Esophagus muscularis mucosa (tissue), 4 donors: ENCODE measurements at regions of chr13 and their contacts with region 1.

Region 1: GRCh38 chr13:102845630-102846260 is at the start of gene ERCC5:
- DNase-seq: peak; percentile 99
- H3K4me3 ChIP-seq: peak within 1 kb of the TSS; percentile 73 to 88 (median 85)
- H3K27ac ChIP-seq: peak within 1 kb of the TSS; percentile 92 to 96 (median 96)
- H3K4me1 ChIP-seq: peaks cover 10 to 40% (median 28%) of the 10 kb centered on the region in 4 donors
- H3K27me3 ChIP-seq: no peaks in the 10 kb centered on the region
- CTCF ChIP-seq: peak in 1 of 3 experiments; percentile 26
- EP300 ChIP-seq: no peak
- POLR2A ChIP-seq: peak; percentile 37
- total RNA-seq, gene ERCC5: 36.1 to 61.0 (median 44.0) TPM

Region 2: DNA sequence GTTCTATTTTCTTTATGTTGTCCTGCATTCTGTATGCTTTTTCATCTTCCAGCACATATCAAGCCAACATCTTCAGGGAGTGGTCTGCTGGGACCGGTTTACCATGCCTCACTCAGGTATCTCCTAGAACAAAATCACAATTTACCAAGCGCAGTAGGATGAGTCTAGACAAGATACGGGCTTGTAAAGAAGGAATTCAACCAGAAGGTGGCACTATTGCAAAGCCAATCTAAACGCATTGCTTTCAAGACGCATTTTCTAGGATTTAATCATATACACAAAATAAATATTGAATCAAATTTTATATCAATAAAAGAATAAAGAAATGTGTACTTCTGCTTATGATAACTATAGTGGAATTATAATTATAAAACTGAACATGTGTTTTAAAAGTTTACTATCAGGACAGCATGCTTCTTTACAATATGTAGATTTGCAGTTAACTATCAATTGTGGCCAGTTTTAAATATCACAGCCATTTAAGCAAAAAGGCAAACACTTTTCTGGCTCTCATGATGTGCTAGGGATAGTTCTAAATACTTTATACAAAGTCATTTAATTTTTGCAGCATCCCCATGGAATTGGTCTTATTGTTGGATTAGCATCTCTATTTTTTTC is 265.1 kb before region 1 on chr13:
- intact Hi-C with region 1: loop called (anchors 5 kb)
- DNase-seq: no peak
- H3K4me3 ChIP-seq: no peak overlapping the region
- H3K27ac ChIP-seq: no peak overlapping the region
- H3K4me1 ChIP-seq: no peaks in the 10 kb centered on the region
- H3K27me3 ChIP-seq: peaks cover 0 to 11% (median 0%) of the 10 kb centered on the region in 4 donors
- CTCF ChIP-seq: peak; percentile 61 to 77 (median 71)
- EP300 ChIP-seq: no peak
- POLR2A ChIP-seq: no peak

Region 3: DNA sequence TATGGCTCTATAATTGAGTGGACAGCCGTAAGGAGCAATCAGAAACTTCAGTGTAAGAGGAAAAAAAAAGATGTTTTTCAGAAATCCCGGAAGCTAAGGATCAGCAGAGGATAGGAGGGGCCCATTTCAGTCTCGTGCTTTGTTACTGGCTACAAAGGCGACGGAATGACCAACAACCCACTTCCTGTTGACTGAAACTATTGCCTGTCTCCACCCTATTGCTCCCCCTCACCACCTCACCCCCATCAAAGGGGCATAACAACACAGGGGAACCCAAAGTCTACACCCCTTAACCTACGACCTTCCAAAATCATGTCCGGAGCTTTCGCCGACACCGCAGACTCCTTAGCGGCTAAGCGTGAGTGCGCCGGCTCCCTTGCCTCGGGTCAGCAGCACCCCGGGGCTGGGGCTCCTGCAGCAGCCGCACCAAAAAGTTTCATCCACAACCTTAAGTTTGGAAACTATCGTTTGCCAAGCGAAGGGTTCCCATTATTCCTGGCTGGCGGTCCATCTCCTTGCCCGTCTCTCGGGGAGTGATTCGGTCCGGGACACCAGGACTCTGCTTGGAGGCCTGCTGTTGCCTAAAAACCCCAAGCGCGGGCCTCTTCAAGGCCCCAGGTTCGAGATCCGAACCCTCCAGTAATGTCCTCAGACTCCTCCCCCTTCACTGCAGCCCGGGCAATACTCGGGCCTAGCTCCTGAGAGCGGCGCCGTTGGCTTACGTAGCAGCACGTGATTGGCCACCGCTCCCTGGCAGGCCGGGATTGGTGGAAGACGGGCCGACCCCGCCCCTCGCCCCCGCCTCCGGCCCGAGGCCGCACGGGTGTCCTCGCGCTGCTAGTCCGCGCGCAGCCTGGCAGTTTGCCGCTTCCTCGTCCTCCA is 249.4 kb before region 1 on chr13 and contains the start of gene TPP2:
- intact Hi-C with region 1: loop called (anchors 2 kb)
- DNase-seq: peak; percentile 99
- H3K4me3 ChIP-seq: peak within 1 kb of the TSS; percentile 84 to 99 (median 98)
- H3K27ac ChIP-seq: peak within 1 kb of the TSS; percentile 93 to 98 (median 97)
- H3K4me1 ChIP-seq: peaks cover 30 to 54% (median 50%) of the 10 kb centered on the region in 4 donors
- H3K27me3 ChIP-seq: peaks cover 0 to 4% (median 0%) of the 10 kb centered on the region in 4 donors
- CTCF ChIP-seq: no peak
- EP300 ChIP-seq: no peak
- POLR2A ChIP-seq: peak; percentile 45
- total RNA-seq, gene TPP2: 30.3 to 38.4 (median 32.1) TPM

Region 4: DNA sequence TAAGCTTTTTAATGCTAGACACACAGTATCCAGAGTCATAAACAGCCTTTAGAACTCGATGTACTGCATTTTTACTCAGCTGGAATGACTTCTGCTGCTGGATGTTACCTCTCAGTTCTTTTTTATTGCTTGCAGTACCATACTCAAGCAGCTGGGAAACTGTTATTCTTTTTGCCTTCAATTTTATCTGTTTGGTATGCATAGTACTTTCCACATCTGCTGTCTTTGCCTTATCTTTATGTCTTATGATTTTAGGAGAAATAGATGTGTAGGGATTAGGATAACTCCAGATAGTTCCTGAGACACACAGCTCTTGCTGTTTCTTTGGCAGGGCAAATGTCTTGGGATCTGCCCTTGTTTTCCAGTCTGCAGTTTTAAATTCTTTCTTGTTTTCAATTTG is 103.6 kb before region 1 on chr13:
- intact Hi-C with region 1: no loop called
- DNase-seq: no peak
- H3K4me3 ChIP-seq: no peak overlapping the region
- H3K27ac ChIP-seq: no peak overlapping the region
- H3K4me1 ChIP-seq: no peaks in the 10 kb centered on the region
- H3K27me3 ChIP-seq: no peaks in the 10 kb centered on the region
- CTCF ChIP-seq: no peak
- EP300 ChIP-seq: no peak
- POLR2A ChIP-seq: no peak

Region 5: DNA sequence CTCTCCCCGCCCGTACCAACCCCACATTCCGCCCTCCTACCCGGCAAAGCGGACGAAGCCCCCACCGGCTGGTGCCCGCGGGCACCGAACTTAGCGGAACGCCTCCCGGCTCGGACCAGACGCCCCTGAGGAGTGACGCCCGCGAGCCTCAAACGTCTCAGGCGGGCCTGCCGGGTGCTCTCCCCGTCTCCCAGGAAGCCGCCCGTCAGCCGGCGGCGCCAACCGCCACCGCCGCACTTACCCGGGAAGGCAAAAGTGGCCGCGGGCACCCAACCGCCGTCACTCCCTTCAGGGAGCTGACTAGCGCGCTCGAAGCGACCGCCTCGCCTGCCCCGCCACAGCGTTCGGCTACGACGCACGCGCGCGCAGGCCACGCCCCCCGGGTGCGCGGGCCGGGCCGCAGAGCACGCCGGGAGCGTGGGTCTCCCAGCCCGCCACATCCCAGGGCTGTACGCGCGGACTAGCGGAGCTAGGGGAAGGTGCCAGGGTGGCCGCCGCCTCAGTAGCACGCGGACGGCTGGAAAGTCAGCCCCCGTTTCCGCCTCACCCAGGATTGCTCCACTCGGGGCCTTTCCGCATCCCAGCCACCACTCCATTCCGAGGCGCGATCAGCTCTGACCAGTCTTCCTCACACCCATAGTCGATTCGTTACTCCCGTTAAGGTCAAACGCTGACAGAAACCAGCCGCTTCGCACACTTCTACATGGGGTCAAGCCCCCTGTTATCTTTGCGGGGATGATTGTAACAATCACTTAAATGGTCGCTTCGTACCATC is 72.1 kb before region 1 on chr13 and contains the start of gene TEX30:
- intact Hi-C with region 1: loop called (anchors 5 kb)
- DNase-seq: peak; percentile 92
- H3K4me3 ChIP-seq: peak within 1 kb of the TSS; percentile 75 to 91 (median 86)
- H3K27ac ChIP-seq: peak within 1 kb of the TSS; percentile 82 to 91 (median 85)
- H3K4me1 ChIP-seq: peaks cover 11 to 21% (median 14%) of the 10 kb centered on the region in 4 donors
- H3K27me3 ChIP-seq: no peaks in the 10 kb centered on the region
- CTCF ChIP-seq: peak in 2 of 3 experiments; percentile 25 to 27
- EP300 ChIP-seq: no peak
- POLR2A ChIP-seq: peak; percentile 57
- total RNA-seq, gene TEX30: 5.1 to 12.5 (median 8.0) TPM

Region 6: GRCh38 chr13:102800145-102801041 is 45.4 kb before region 1 on chr13:
- intact Hi-C with region 1: loop called (anchors 5 kb)
- DNase-seq: peak; percentile 93
- H3K4me3 ChIP-seq: peak overlapping the region; percentile 76 to 90 (median 86)
- H3K27ac ChIP-seq: peak overlapping the region; percentile 83 to 91 (median 85)
- H3K4me1 ChIP-seq: peaks cover 26 to 71% (median 37%) of the 10 kb centered on the region in 4 donors
- H3K27me3 ChIP-seq: no peaks in the 10 kb centered on the region
- CTCF ChIP-seq: peak; percentile 66 to 79 (median 71)
- EP300 ChIP-seq: no peak
- POLR2A ChIP-seq: no peak

Region 7: GRCh38 chr13:102901615-102902305 is 56.0 kb after region 1 on chr13:
- intact Hi-C with region 1: no loop called
- DNase-seq: no peak
- H3K4me3 ChIP-seq: no peak overlapping the region
- H3K27ac ChIP-seq: no peak overlapping the region
- H3K4me1 ChIP-seq: peaks cover 0 to 5% (median 0%) of the 10 kb centered on the region in 4 donors
- H3K27me3 ChIP-seq: no peaks in the 10 kb centered on the region
- CTCF ChIP-seq: no peak
- EP300 ChIP-seq: no peak
- POLR2A ChIP-seq: no peak